Dendritic cell treated with granulocyte-macrophage colony-stimulating factor and Interleukin-4, amounts not matched to agents 40 ng/mL and 50 ng/mL, for 4 days (primary cell): ENCODE measurements at regions of chr11 and their contacts with region 1.

Region 1: GRCh38 chr11:61776551-61777075 is 15.8 kb downstream of the TMEM258 start:
- H3K4me3 Mint-ChIP-seq: peak overlapping the region; percentile 17
- H3K27ac Mint-ChIP-seq: no peak overlapping the region
- H3K4me1 Mint-ChIP-seq: peaks cover 47% of the 10 kb centered on the region
- H3K27me3 Mint-ChIP-seq: peaks cover 37% of the 10 kb centered on the region

Region 2: DNA sequence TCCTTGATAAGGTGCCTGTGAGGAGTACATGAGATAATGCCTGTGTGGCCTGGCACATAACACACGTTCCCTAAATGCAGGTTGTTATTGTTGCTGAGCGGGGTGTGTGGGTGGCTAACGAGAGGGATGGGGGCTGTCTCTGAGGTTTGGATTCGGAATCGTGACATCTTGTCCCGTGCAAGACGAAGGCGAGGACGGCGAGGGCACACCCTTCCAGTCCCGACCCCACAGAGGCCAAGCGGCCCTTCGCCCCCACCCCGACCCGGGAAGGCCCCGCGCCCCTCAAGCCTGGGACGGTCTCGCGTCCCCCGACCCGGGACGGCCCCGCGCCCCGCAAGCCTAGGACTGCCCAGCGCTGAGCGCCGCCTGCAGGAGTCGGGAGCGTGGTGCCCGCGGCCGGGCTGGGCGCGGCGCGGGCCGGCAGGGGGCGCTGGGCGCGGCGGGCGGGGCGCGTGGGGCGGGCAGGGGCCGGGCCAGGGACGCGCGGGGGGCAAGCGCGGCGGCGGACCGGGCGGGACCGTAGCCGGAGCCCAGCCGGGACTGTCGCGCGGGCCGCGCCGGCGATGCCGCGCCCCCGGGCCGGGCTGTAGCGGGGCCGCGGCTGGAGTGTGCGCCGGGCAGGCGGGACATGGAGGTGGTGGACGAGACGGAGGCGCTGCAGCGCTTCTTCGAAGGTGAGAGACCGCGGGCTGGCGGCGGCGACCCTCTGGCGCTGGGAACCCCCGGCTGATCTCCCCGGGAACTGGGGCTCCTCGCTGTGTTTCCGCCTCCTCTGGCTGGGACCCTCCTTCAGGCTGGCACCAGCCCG is 24.3 kb before region 1 on chr11 and contains the start of gene MYRF:
- intact Hi-C with region 1: loop called (anchors 1 kb)
- H3K4me3 Mint-ChIP-seq: peak within 1 kb of the TSS; percentile 73
- H3K27ac Mint-ChIP-seq: peak within 1 kb of the TSS; percentile 64
- H3K4me1 Mint-ChIP-seq: peaks cover 70% of the 10 kb centered on the region
- H3K27me3 Mint-ChIP-seq: peaks cover 48% of the 10 kb centered on the region

Region 3: DNA sequence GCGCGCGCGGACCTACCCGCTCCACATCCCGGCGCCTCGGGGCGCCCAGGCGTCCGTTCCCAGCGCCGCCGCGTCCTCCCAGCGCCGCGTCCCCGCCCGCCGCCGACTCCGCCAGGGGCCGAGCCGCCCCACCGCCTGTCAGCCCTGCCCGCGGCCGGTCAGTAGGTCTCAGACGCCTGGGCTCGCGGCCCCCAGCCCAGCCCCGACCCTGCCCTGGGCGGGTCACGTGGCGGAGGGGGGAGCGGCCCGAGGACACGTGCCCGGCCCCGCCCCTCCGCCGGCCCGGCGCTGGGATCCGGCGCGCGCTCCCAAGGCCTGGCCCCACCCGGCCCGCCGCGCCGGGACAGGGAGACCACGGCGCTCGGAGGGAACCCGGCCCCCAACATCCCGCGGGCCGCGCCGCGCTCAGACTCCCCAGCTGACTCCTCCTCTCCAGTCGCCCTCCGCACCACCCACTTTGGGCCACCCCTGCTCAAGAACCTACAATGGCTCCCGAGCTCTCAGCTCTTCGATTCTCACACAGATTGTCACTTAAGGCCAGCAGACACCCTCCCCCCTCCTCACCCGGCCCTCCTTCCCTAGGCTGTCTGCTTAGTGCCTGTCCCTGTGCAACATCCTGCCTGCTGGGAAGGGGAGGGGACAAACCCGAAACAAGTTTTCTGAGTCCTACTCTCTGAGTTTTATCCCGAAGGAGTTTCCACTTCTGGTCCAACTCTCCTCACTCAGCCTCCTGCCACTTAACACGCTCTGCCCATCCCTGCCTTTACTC is 140.9 kb after region 1 on chr11 and contains the start of gene RAB3IL1:
- intact Hi-C with region 1: no loop called
- H3K4me3 Mint-ChIP-seq: peak within 1 kb of the TSS; percentile 83
- H3K27ac Mint-ChIP-seq: peak within 1 kb of the TSS; percentile 83
- H3K4me1 Mint-ChIP-seq: peaks cover 77% of the 10 kb centered on the region
- H3K27me3 Mint-ChIP-seq: peaks cover 65% of the 10 kb centered on the region